ENCODE measurements at regions of chr11 and their contacts with region 1.

Region 1: GRCh38 chr11:8558436-8558835 is 35.6 kb downstream of the STK33 start:
- DNase-seq: no peak
- ATAC-seq: no peak
- H3K4me3 ChIP-seq: no peak overlapping the region
- H3K27ac ChIP-seq: no peak overlapping the region
- H3K4me1 ChIP-seq: no peaks in the 10 kb centered on the region
- H3K27me3 ChIP-seq: no peaks in the 10 kb centered on the region
- CTCF ChIP-seq: no peak
- EP300 ChIP-seq: no peak
- POLR2A ChIP-seq: no peak
- RAD21 ChIP-seq: no peak

Region 2: DNA sequence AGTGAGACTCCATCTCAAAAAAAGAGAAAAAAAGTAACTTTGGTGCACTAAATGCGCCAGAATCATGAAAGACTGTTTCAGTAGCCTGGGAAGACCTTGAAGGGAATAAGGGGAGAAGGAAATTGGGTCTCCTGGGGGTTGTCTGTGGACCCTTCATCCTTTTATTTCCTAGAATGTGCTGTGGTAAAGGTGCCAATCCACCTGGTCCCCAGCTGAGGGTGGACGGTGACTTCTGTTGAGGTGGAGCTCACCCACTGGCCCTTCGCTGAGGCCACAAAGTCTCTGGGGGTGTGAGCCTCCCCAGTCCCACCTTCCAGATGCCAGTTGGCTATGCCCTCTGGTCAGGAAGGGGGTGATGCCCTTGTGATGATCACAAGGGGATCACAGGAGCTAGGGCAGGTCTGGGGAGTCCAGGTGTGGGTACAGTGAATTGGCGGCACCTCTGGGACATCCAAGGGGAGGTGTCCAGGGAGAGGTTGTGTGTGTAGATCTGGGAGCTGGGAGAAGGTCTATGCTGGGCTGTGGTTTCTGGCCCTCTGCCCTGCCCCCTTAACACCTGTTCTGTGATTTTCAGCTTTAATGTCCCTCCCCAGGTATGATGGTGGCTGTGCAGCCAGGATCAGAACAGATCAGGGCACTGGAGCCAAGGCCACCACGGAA is 260.5 kb before region 1 on chr11:
- CTCF ChIA-PET with region 1: no interaction called
- POLR2A ChIA-PET with region 1: interaction called, 10 read pairs
- RAD21 ChIA-PET with region 1: no interaction called
- SMC1A ChIA-PET with region 1: no interaction called
- in situ Hi-C with region 1: no loop called
- intact Hi-C with region 1: no loop called
- DNase-seq: no peak
- ATAC-seq: no peak
- H3K4me3 ChIP-seq: no peak overlapping the region
- H3K27ac ChIP-seq: no peak overlapping the region
- H3K4me1 ChIP-seq: no peaks in the 10 kb centered on the region
- H3K27me3 ChIP-seq: peaks cover 2 to 4% of the 10 kb centered on the region in 2 experiments; a peak in 1 of 4 replicates
- CTCF ChIP-seq: no peak
- EP300 ChIP-seq: no peak
- POLR2A ChIP-seq: no peak
- RAD21 ChIP-seq: no peak

Region 3: DNA sequence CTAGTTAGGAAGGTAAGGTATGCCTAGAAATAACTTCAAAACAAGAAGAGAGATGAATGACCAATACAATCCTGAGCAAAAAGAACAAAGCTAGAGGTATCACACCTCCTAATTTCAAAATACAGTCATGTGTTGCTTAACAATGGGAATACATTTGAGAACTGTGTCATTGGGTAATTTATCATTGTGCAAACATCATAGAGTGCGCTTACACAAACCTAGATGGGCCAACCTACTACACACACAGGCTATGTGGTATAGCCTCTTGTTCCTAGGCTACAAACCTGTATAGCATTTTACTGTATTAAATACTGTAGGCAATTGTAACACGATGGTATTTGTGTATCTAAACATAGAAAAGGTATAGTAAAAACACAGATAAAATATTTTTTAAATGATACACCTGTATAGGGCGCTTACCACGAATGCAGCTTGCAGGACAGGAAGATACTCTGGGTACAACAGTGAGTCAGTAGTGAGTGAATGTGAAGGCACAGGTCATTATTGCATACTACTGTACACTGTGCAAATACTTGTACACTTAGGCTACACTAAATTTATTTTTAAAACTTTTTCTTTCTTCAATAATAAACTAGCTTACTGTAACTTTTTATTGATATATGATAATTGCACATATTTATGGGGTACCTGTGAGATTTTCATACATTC is 12.6 kb before region 1 on chr11:
- CTCF ChIA-PET with region 1: interaction called, 8 read pairs
- POLR2A ChIA-PET with region 1: no interaction called
- RAD21 ChIA-PET with region 1: no interaction called
- SMC1A ChIA-PET with region 1: interaction called, 25 read pairs
- in situ Hi-C with region 1: no loop called
- intact Hi-C with region 1: no loop called
- DNase-seq: no peak
- ATAC-seq: no peak
- H3K4me3 ChIP-seq: no peak overlapping the region
- H3K27ac ChIP-seq: no peak overlapping the region
- H3K4me1 ChIP-seq: no peaks in the 10 kb centered on the region
- H3K27me3 ChIP-seq: no peaks in the 10 kb centered on the region
- CTCF ChIP-seq: no peak
- EP300 ChIP-seq: no peak
- POLR2A ChIP-seq: no peak
- RAD21 ChIP-seq: no peak

Region 4: GRCh38 chr11:8934749-8935478 is 376.5 kb after region 1 on chr11:
- CTCF ChIA-PET with region 1: no interaction called
- POLR2A ChIA-PET with region 1: no interaction called
- RAD21 ChIA-PET with region 1: no interaction called
- SMC1A ChIA-PET with region 1: no interaction called
- in situ Hi-C with region 1: no loop called
- intact Hi-C with region 1: no loop called
- DNase-seq: no peak
- ATAC-seq: no peak
- H3K4me3 ChIP-seq: no peak overlapping the region
- H3K27ac ChIP-seq: no peak overlapping the region
- H3K4me1 ChIP-seq: no peaks in the 10 kb centered on the region
- H3K27me3 ChIP-seq: no peaks in the 10 kb centered on the region
- CTCF ChIP-seq: no peak
- EP300 ChIP-seq: no peak
- POLR2A ChIP-seq: no peak
- RAD21 ChIP-seq: no peak